GM10248 (cell line): ENCODE measurements at regions of chr22 and their contacts with region 1.

Region 1: GRCh38 chr22:48096851-48097665 is 1334.6 kb downstream of the TBC1D22A start:
- DNase-seq: no peak
- CTCF ChIP-seq: no peak

Region 2: DNA sequence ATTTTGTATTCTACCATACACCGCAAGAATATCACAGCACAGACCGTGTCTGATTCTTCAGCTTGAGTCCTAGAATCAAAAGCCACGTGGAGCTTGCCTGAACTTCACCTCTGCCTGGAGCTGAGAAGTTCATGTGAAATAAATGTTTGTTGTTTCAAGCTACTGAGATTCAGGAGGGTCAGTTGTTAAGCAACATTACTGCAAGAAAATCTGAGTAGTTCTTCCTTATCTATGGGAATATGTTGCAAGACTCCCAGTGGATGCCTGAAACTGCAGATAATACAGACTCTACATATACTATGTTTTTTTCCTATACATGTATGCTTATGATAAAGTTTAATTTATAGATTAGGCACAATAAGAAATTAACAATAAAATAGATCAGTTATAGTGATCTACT is 339.3 kb before region 1 on chr22:
- CTCF ChIA-PET with region 1: no interaction called
- POLR2A ChIA-PET with region 1: no interaction called
- DNase-seq: no peak
- CTCF ChIP-seq: no peak

Region 3: DNA sequence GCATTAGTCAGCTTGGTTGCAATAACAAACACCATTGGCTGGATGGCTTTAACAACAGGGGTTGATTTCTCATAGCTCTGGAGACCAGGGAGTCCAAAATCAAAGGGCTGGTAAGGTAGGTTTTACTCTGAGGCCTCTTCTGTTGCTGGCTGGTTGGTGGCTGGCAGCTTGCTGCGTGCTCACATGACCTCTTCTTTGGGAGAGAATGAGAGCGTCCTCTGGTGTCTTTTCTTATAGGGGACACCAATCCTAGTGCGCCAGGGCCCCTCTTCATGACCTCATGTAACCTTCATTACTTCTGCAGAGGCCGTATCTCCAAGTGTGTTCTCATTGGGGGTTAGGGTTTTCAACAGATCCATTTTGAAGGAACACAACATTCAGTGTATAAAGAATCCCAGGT is 26.3 kb before region 1 on chr22:
- CTCF ChIA-PET with region 1: no interaction called
- POLR2A ChIA-PET with region 1: no interaction called
- DNase-seq: no peak
- CTCF ChIP-seq: no peak

Region 4: GRCh38 chr22:48121984-48122383 is 24.9 kb after region 1 on chr22:
- CTCF ChIA-PET with region 1: no interaction called
- POLR2A ChIA-PET with region 1: no interaction called
- DNase-seq: no peak
- CTCF ChIP-seq: no peak

Region 5: GRCh38 chr22:48177631-48178030 is 80.6 kb after region 1 on chr22:
- CTCF ChIA-PET with region 1: no interaction called
- POLR2A ChIA-PET with region 1: interaction called, 11 read pairs
- DNase-seq: no peak
- CTCF ChIP-seq: no peak